Dorsolateral prefrontal cortex (tissue), 120 donors: ENCODE measurements at regions of chr18 and their contacts with region 1.

Region 1: DNA sequence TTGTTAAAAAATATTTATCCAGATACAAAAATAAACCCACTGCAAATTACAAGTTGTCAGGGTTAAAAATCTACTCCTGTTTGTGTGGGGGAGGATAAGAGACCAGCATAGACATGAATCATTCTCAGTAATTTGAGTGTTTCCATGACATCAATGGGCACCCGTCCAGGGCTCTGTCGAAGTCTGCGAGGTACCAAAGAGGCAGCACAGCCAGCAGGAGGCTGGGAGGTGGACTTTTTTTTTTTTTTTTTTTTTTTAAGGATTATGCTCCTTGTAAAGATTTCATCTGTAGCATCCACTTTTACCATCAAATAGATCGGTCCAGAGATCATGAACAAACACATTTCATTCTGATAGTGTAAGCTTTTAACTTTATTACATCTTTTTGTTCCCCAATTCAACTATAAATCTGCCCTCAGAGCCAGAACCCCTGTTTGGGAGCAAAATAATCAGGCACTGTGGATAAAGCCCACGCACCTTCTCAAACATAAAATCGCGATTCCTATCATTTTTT is 182.0 kb downstream of the TCF4 start:
- DNase-seq: peak; percentile 66 to 96 (median 90)
- H3K4me3 ChIP-seq: peak overlapping the region; percentile 26 to 76 (median 57)
- H3K27ac ChIP-seq: peak overlapping the region; percentile 88 to 100 (median 98)
- H3K27me3 ChIP-seq: no peaks in the 10 kb centered on the region
- CTCF ChIP-seq: peak in 24 of 56 donors; percentile 8 to 50 (median 20)

Region 2: GRCh38 chr18:55343396-55344073 is 62.4 kb before region 1 on chr18:
- intact Hi-C with region 1: loop called in 1 of 2 experiments (anchors 2 kb)
- DNase-seq: no peak
- H3K4me3 ChIP-seq: peak overlapping the region in 22 of 59 donors; percentile 0 to 62 (median 14)
- H3K27ac ChIP-seq: peak overlapping the region; percentile 27 to 100 (median 95)
- H3K27me3 ChIP-seq: no peaks in the 10 kb centered on the region
- CTCF ChIP-seq: peak; percentile 53 to 84 (median 74)

Region 3: GRCh38 chr18:55351980-55352714 is 53.8 kb before region 1 on chr18:
- intact Hi-C with region 1: loop called (anchors 2 kb)
- DNase-seq: no peak
- H3K4me3 ChIP-seq: peak overlapping the region in 55 of 59 donors; percentile 1 to 62 (median 37)
- H3K27ac ChIP-seq: peak overlapping the region; percentile 66 to 100 (median 95)
- H3K27me3 ChIP-seq: no peaks in the 10 kb centered on the region
- CTCF ChIP-seq: no peak

Region 4: GRCh38 chr18:55589625-55590291 is 183.8 kb after region 1 on chr18:
- intact Hi-C with region 1: loop called in 1 of 2 experiments (anchors 5 kb)
- DNase-seq: peak; percentile 92 to 96 (median 94)
- H3K4me3 ChIP-seq: peak overlapping the region; percentile 50 to 86 (median 72)
- H3K27ac ChIP-seq: peak overlapping the region; percentile 71 to 99 (median 96)
- H3K27me3 ChIP-seq: no peaks in the 10 kb centered on the region
- CTCF ChIP-seq: peak in 50 of 56 donors; percentile 4 to 63 (median 46)